H1 (cell line): ENCODE measurements at regions of chr2 and their contacts with region 1.

Region 1: DNA sequence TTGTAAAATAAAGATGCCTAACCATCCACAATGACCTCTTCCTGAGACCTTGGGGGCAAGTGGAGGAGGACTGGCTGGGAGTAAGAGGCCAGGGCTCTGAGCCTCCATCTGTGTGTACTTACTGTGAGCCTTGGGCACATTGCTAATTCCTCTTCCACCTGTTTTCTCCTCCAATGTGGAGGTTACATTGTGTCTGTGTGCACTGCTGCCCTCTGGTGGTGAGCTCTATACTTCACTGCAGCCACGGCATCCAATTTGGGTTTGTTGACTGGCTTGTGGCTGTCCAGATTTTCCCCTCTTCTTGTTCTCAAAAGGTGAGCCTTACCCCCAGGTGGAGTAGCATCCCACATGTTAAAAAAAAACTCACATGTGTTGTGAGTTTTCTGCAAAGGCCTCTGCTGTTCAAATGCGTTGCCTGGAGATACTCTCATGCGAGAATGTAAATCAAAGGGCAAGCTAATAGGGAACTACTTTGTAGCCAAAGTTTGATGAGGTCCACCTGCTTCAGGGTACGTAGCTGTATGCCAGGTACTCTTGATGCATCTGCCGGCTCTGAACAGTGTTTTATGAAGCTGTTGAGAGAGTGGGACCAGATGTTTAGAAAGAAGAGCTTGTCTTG is 80.8 kb downstream of the APOB start:
- DNase-seq: peak; percentile 27 to 90
- H3K4me3 ChIP-seq: no peak overlapping the region
- H3K27ac ChIP-seq: no peak overlapping the region
- H3K4me1 ChIP-seq: no peaks in the 10 kb centered on the region
- H3K27me3 ChIP-seq: no peaks in the 10 kb centered on the region
- CTCF ChIP-seq: peak; percentile 85 to 89 (median 85)
- EP300 ChIP-seq: no peak
- POLR2A ChIP-seq: no peak
- RAD21 ChIP-seq: peak; percentile 88

Region 2: DNA sequence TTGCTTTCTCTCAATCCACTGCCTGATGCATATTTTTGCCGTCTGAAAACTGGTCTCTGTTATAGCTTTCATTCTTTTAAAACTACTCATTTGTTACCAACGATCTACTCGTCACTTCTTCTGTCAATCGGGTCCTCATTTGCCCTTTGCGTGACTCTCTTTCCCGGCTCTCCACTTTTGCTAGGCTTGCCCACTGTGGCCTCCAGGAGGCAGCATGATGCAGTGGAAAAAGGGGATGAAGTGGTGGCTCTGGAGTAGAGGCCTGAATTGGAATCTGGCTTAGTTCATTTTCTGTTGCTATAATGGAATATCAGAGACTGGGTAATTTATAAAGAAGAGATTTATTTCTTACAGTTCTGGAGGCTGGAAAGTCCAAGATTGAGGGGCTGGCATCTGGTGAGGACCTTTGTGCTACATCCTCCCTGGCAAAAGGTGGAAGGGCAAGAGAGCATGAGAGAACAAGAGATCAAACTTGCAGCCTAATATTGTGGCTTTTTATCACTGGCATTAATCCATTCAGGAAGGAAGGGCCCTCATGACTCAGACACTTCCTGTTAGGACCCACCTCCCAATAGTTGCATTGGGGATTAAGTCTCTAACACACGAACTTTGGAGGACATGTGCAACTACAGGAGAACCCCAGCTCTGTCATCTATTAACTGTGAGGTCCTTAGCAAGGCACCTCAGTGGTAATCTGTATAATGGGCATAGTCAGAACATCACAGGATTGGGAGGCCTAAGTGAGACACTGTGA is 280.7 kb before region 1 on chr2:
- CTCF ChIA-PET with region 1: interaction called, 55 read pairs
- POLR2A ChIA-PET with region 1: no interaction called
- DNase-seq: peak in 1 of 2 experiments; percentile 63
- H3K4me3 ChIP-seq: no peak overlapping the region
- H3K27ac ChIP-seq: no peak overlapping the region
- H3K4me1 ChIP-seq: no peaks in the 10 kb centered on the region; a peak in 1 of 7 replicates
- H3K27me3 ChIP-seq: no peaks in the 10 kb centered on the region
- CTCF ChIP-seq: peak; percentile 75 to 78 (median 77)
- EP300 ChIP-seq: no peak
- POLR2A ChIP-seq: no peak
- RAD21 ChIP-seq: peak; percentile 78 to 82

Region 3: DNA sequence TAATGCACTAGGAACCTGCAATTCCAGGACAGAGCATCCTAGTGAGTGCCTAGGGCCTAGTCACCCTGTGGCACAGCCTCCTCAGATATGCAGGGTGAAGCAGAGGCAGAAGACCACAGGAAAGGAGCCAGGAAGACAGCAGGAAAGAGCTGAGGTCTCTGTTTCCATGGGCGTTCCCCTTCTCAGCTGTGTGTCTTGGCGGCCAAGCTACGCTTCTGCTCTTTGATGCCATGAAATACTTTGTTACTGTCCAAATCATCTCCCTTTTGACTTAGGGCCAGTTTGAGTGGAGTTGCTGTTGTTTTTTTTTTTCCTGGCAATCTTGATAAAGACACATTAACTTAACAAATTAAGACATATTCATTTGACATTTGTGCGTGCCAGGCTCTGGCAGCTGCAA is 13.5 kb after region 1 on chr2:
- CTCF ChIA-PET with region 1: interaction called, 22 read pairs
- POLR2A ChIA-PET with region 1: no interaction called
- DNase-seq: no peak
- H3K4me3 ChIP-seq: no peak overlapping the region
- H3K27ac ChIP-seq: no peak overlapping the region
- H3K4me1 ChIP-seq: no peaks in the 10 kb centered on the region
- H3K27me3 ChIP-seq: no peaks in the 10 kb centered on the region
- CTCF ChIP-seq: no peak
- EP300 ChIP-seq: no peak
- POLR2A ChIP-seq: no peak
- RAD21 ChIP-seq: no peak

Region 4: DNA sequence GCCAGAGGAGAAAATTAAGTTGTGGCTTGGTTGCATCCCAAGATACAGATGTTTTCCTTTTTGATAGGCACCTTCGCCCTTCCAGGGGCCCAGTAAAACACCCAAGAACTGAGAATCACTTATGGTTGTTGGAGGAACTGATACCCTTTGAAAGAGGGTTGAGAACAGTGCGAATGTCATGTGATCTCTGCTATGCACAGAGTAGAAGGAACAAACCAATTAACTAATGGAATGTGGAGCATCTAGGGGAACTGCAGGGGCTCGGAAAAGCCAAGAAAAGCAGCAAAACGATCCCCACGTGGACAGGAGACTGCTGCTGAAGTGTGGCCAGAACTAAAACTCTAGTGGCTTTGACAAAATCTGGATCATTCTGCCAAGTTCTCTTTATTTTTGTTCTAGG is 22.0 kb after region 1 on chr2:
- CTCF ChIA-PET with region 1: interaction called, 13 read pairs
- POLR2A ChIA-PET with region 1: no interaction called
- DNase-seq: no peak
- H3K4me3 ChIP-seq: no peak overlapping the region
- H3K27ac ChIP-seq: no peak overlapping the region
- H3K4me1 ChIP-seq: peaks cover 0 to 7% (median 2%) of the 10 kb centered on the region in 4 experiments; a peak in 1 of 7 replicates
- H3K27me3 ChIP-seq: no peaks in the 10 kb centered on the region
- CTCF ChIP-seq: no peak
- EP300 ChIP-seq: no peak
- POLR2A ChIP-seq: no peak
- RAD21 ChIP-seq: no peak

Region 5: GRCh38 chr2:21025690-21026478 is 62.8 kb after region 1 on chr2:
- CTCF ChIA-PET with region 1: interaction called, 48 read pairs
- POLR2A ChIA-PET with region 1: no interaction called
- DNase-seq: no peak
- H3K4me3 ChIP-seq: no peak overlapping the region
- H3K27ac ChIP-seq: no peak overlapping the region
- H3K4me1 ChIP-seq: no peaks in the 10 kb centered on the region
- H3K27me3 ChIP-seq: no peaks in the 10 kb centered on the region
- CTCF ChIP-seq: no peak
- EP300 ChIP-seq: no peak
- POLR2A ChIP-seq: no peak
- RAD21 ChIP-seq: no peak